CD4-positive, alpha-beta T cell (primary cell): ENCODE measurements at regions of chr7 and their contacts with region 1.

Region 1: DNA sequence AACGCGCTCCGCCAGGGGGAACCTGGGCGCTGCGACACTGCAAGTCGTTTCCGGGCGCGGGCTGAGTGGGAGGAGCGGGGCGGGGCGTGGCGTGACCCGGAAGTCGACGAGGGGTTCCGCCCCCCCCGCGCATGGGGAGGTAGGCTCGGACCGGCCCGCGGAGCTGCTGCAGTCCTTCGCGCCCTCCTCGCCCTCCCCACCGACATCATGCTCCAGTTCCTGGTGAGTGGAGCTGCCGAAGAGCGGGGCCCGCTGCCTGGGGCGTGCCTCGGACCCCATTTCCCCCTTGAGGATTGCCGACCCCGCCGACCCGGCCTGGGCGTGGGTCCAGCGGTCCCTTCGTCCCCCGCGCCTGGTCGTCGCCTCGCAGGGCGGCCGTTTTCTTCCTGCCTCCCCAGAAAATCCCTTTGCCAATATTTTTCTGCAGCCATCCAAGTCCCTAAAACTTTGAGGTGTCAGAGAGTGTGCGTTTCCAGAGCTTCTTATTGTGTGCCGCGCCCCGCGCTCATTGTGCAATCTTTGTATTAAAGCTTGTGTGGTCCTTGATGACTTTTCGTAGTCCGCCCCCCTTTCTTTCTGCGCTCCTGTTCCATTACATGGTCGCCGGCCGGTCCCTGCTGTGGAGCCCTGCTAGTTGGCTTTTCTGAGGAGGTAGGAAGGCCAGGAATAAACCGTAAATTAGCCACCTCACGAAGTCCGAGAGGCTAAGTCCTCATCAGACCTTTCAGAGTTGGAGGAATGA is at the start of gene STMP1:
- DNase-seq: peak; percentile 93 to 98 (median 96)
- ATAC-seq: peak; percentile 97
- H3K4me3 ChIP-seq: peak within 1 kb of the TSS; percentile 89
- H3K4me3 Mint-ChIP-seq: peak within 1 kb of the TSS; percentile 93
- H3K27ac ChIP-seq: peak within 1 kb of the TSS; percentile 47 to 53
- H3K27ac Mint-ChIP-seq: peak within 1 kb of the TSS; percentile 81
- H3K4me1 ChIP-seq: peaks cover 23% of the 10 kb centered on the region
- H3K4me1 Mint-ChIP-seq: peaks cover 48% of the 10 kb centered on the region
- H3K27me3 ChIP-seq: no peaks in the 10 kb centered on the region
- H3K27me3 Mint-ChIP-seq: no peaks in the 10 kb centered on the region
- CTCF ChIP-seq: no peak
- total RNA-seq, gene STMP1: 11.5 to 14.1 TPM

Region 2: GRCh38 chr7:134316539-134317344 is 1345.8 kb before region 1 on chr7 and contains the start of gene SLC35B4:
- CTCF ChIA-PET with region 1: interaction called, 3 read pairs
- POLR2A ChIA-PET with region 1: no interaction called
- intact Hi-C with region 1: loop called in 1 of 2 experiments (anchors 5 kb)
- DNase-seq: peak; percentile 90 to 97 (median 92)
- ATAC-seq: peak; percentile 96
- H3K4me3 ChIP-seq: peak within 1 kb of the TSS; percentile 98
- H3K4me3 Mint-ChIP-seq: peak within 1 kb of the TSS; percentile 93
- H3K27ac ChIP-seq: peak within 1 kb of the TSS; percentile 36 to 65
- H3K27ac Mint-ChIP-seq: peak within 1 kb of the TSS; percentile 77
- H3K4me1 ChIP-seq: peaks cover 15% of the 10 kb centered on the region
- H3K4me1 Mint-ChIP-seq: peaks cover 26% of the 10 kb centered on the region
- H3K27me3 ChIP-seq: no peaks in the 10 kb centered on the region
- H3K27me3 Mint-ChIP-seq: no peaks in the 10 kb centered on the region
- CTCF ChIP-seq: peak; percentile 27
- total RNA-seq, gene SLC35B4: 5.8 to 7.8 TPM

Region 3: GRCh38 chr7:135509903-135510602 is 152.5 kb before region 1 on chr7 and contains the start of gene CNOT4:
- CTCF ChIA-PET with region 1: no interaction called
- POLR2A ChIA-PET with region 1: interaction called, 3 read pairs
- intact Hi-C with region 1: loop called (anchors 2 to 5 kb)
- DNase-seq: peak; percentile 94 to 98 (median 97)
- ATAC-seq: peak; percentile 94
- H3K4me3 ChIP-seq: peak within 1 kb of the TSS; percentile 91
- H3K4me3 Mint-ChIP-seq: no peak within 1 kb of the TSS
- H3K27ac ChIP-seq: peak within 1 kb of the TSS; percentile 90 to 96
- H3K27ac Mint-ChIP-seq: no peak within 1 kb of the TSS
- H3K4me1 ChIP-seq: peaks cover 16% of the 10 kb centered on the region
- H3K4me1 Mint-ChIP-seq: peaks cover 14% of the 10 kb centered on the region
- H3K27me3 ChIP-seq: no peaks in the 10 kb centered on the region
- H3K27me3 Mint-ChIP-seq: no peaks in the 10 kb centered on the region
- CTCF ChIP-seq: no peak
- total RNA-seq, gene CNOT4: 24.0 to 29.8 TPM

Region 4: DNA sequence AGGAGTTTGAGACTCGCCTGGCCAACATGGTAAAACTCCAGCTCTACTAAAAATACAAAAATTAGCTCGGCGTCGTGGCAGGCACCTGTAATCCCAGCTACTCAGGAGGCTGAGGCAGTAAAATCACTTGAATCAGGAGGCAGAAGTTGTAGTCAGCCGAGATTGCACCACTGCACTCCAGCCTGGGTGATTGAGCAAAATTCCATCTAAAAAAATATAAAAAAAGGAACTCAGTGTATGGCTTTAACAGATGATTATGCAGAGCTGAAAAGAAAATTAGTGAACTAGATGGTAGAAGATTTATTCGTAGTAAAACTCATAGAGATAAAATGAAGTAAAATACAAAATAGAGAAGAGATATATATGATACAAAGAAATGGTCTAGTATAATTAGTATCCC is 140.0 kb before region 1 on chr7:
- CTCF ChIA-PET with region 1: no interaction called
- POLR2A ChIA-PET with region 1: no interaction called
- intact Hi-C with region 1: no loop called
- DNase-seq: no peak
- ATAC-seq: no peak
- H3K4me3 ChIP-seq: no peak overlapping the region
- H3K4me3 Mint-ChIP-seq: no peak overlapping the region
- H3K27ac ChIP-seq: no peak overlapping the region
- H3K27ac Mint-ChIP-seq: no peak overlapping the region
- H3K4me1 ChIP-seq: no peaks in the 10 kb centered on the region
- H3K4me1 Mint-ChIP-seq: no peaks in the 10 kb centered on the region
- H3K27me3 ChIP-seq: no peaks in the 10 kb centered on the region
- H3K27me3 Mint-ChIP-seq: no peaks in the 10 kb centered on the region
- CTCF ChIP-seq: no peak

Region 5: GRCh38 chr7:135645296-135645904 is 17.1 kb before region 1 on chr7:
- CTCF ChIA-PET with region 1: interaction called, 16 read pairs
- POLR2A ChIA-PET with region 1: interaction called, 5 read pairs
- intact Hi-C with region 1: no loop called
- DNase-seq: peak in 4 of 14 experiments; percentile 20 to 64 (median 56)
- ATAC-seq: peak; percentile 92
- H3K4me3 ChIP-seq: no peak overlapping the region
- H3K4me3 Mint-ChIP-seq: no peak overlapping the region
- H3K27ac ChIP-seq: no peak overlapping the region
- H3K27ac Mint-ChIP-seq: no peak overlapping the region
- H3K4me1 ChIP-seq: no peaks in the 10 kb centered on the region
- H3K4me1 Mint-ChIP-seq: no peaks in the 10 kb centered on the region
- H3K27me3 ChIP-seq: no peaks in the 10 kb centered on the region
- H3K27me3 Mint-ChIP-seq: no peaks in the 10 kb centered on the region
- CTCF ChIP-seq: peak; percentile 77

Region 6: GRCh38 chr7:135977007-135977741 is 314.6 kb after region 1 on chr7 and contains the start of gene MTPN:
- CTCF ChIA-PET with region 1: no interaction called
- POLR2A ChIA-PET with region 1: interaction called, 4 read pairs
- intact Hi-C with region 1: loop called (anchors 1 kb)
- DNase-seq: peak; percentile 93 to 98 (median 97)
- ATAC-seq: peak; percentile 81
- H3K4me3 ChIP-seq: peak within 1 kb of the TSS; percentile 90
- H3K4me3 Mint-ChIP-seq: peak within 1 kb of the TSS; percentile 92
- H3K27ac ChIP-seq: peak within 1 kb of the TSS; percentile 90 to 91
- H3K27ac Mint-ChIP-seq: peak within 1 kb of the TSS; percentile 92
- H3K4me1 ChIP-seq: peaks cover 59% of the 10 kb centered on the region
- H3K4me1 Mint-ChIP-seq: peaks cover 86% of the 10 kb centered on the region
- H3K27me3 ChIP-seq: no peaks in the 10 kb centered on the region
- H3K27me3 Mint-ChIP-seq: no peaks in the 10 kb centered on the region
- CTCF ChIP-seq: no peak
- total RNA-seq, gene MTPN: 88.4 to 94.0 TPM

Region 7: DNA sequence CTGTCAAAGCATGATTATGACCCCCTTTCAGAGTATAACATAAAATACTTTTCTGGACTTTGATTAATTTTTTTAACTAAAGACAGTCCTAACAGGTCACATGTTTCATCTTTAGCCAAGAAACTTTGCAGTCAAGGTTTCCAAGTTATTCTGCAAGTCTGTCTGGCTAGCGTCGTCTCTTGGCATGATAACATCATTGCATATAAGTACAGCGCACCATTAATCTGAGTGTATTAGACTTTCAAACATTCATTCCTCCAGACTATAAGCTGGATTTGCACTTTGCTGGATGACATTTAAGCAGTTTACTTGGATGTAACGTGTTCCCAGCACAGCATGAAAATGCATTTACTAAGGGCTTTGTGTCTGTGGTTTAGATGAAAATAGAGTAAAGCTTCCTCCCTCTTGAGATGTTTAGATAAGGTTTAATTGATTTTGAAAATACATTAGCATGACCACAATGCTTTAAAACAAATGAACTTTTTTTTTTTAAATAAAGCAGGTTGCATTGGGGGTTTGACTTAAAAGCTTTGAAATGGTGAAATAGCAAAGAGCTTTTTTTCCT is 663.6 kb after region 1 on chr7:
- CTCF ChIA-PET with region 1: no interaction called
- POLR2A ChIA-PET with region 1: no interaction called
- intact Hi-C with region 1: no loop called
- DNase-seq: no peak
- ATAC-seq: no peak
- H3K4me3 ChIP-seq: no peak overlapping the region
- H3K4me3 Mint-ChIP-seq: no peak overlapping the region
- H3K27ac ChIP-seq: no peak overlapping the region
- H3K27ac Mint-ChIP-seq: no peak overlapping the region
- H3K4me1 ChIP-seq: no peaks in the 10 kb centered on the region
- H3K4me1 Mint-ChIP-seq: no peaks in the 10 kb centered on the region
- H3K27me3 ChIP-seq: no peaks in the 10 kb centered on the region
- H3K27me3 Mint-ChIP-seq: no peaks in the 10 kb centered on the region
- CTCF ChIP-seq: no peak